Sigmoid colon (tissue), 7 donors: ENCODE measurements at regions of chr6 and their contacts with region 1.

Region 1: DNA sequence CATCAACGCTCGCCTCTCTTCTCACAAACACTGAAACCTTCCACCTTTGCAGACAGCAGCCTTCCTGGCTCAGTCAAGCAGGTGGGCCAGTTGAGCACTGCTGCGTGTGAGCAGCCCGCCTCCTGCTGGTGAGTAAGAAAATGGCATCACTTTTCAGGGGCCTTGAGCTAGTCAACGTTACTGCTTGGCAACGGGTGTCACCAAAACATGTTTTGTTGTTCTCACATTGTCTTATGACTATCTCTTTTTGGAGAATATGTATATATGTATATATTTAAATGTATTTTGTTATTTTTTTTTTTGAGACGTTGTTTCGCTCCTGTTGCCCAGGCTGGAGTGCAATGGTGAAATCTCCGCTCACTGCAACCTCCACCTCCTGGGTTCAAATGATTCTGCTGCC is 97.0 kb upstream of the AGPAT4 start:
- DNase-seq: no peak
- H3K4me3 ChIP-seq: no peak overlapping the region
- H3K27ac ChIP-seq: no peak overlapping the region
- H3K4me1 ChIP-seq: peaks cover 0 to 6% (median 0%) of the 10 kb centered on the region in 4 donors
- H3K27me3 ChIP-seq: no peaks in the 10 kb centered on the region
- CTCF ChIP-seq: peak; percentile 67 to 81 (median 71)
- EP300 ChIP-seq: no peak
- POLR2A ChIP-seq: no peak

Region 2: DNA sequence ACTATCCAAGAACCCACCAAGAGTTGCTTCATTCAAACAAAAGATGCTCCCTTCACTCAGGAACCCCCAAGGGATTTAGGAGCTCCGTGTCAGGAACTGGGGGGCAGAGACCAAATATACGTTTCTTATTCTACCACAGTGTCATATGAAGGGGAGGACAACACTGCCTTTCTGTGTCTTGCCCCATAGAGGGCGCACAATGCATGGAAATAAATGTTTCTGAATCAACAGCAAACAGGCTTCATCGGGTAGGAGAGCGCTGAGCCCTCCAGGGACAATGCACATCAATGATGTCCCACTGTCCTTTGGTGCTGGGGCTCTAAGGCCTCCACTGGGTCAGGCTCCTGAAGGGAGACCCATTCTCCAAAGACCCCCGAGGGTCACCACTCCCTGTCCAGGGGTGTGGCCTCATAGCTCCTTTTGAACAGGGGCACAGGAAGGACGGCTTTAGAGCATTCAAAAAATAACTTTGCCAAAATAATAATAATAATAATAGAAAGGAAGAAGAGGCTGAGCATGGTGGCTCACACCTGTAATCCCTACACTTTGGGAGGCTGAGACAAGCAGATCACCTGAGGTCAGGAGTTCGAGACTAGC is 637.7 kb before region 1 on chr6:
- intact Hi-C with region 1: loop called (anchors 5 kb)
- DNase-seq: no peak
- H3K4me3 ChIP-seq: no peak overlapping the region
- H3K27ac ChIP-seq: no peak overlapping the region
- H3K4me1 ChIP-seq: no peaks in the 10 kb centered on the region
- H3K27me3 ChIP-seq: no peaks in the 10 kb centered on the region
- CTCF ChIP-seq: peak; percentile 21 to 44 (median 40)
- EP300 ChIP-seq: no peak
- POLR2A ChIP-seq: no peak

Region 3: DNA sequence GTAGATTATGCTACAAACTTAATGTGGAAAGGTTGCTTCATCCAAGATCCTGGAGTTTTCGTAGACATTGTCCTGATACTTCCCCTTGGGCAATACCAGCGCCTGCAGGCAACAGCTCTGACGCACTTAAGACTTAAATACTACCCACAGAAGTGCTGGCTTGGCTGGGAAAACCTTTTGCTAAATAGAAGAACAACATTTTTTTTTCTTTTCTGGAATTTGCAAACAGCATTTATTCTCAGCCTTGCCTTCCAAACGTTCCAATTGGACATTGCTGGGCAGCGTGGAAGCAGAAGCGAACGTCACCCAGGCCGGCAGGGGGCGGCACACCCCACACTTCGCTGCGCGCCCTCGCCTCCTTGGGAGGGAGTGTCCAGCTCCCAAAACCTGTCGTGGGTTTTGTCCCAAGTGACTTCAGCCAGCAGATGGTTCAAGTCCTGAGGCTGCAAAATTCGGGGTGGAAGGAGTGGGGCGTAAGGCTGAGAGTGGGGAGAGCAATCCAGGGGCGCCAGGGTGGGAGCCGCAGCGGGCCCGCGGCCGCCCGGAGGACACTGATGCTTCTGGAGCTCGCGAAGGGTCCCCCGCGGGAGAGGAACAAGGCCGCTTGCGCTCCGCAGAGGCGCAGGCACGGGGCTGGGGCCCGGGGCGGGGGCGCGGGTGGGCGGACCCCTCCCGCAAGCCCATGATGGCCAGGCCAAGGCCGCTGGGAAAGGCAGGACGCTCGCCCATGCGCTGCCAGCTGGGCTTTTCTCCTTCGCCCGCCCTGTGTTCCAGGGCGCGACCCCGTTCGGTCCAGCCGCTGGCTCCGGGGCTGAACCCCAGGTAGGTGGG is 440.1 kb before region 1 on chr6:
- intact Hi-C with region 1: loop called (anchors 1 kb)
- DNase-seq: peak; percentile 89
- H3K4me3 ChIP-seq: peak overlapping the region; percentile 32 to 58 (median 52)
- H3K27ac ChIP-seq: peak overlapping the region in 3 of 4 donors; percentile 22 to 62 (median 41)
- H3K4me1 ChIP-seq: peaks cover 0 to 12% (median 8%) of the 10 kb centered on the region in 4 donors
- H3K27me3 ChIP-seq: peaks cover 0 to 8% (median 0%) of the 10 kb centered on the region in 3 donors
- CTCF ChIP-seq: peak; percentile 87 to 93 (median 89)
- EP300 ChIP-seq: peak in 2 of 4 donors; percentile 9 to 13
- POLR2A ChIP-seq: no peak

Region 4: DNA sequence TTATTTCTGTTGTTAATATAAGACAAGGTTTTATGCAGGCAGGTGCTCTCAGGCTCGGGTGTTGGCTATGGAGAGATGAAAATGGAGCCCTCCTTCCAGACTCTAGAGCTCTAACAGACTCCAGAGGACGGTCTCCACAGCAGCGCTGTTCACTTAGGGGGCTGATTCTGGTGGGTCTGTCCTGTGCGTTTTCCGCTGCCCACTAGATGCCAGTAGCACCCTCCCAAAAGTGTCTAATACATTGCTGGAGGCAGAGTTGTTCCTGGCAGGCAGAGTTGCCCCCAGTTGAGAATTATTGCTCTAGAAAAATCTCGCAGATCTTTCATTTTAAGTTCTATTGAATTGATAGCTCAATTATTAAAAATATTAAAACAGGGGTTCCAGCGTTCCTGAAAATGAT is 269.4 kb before region 1 on chr6:
- intact Hi-C with region 1: loop called (anchors 10 kb)
- DNase-seq: no peak
- H3K4me3 ChIP-seq: no peak overlapping the region
- H3K27ac ChIP-seq: no peak overlapping the region
- H3K4me1 ChIP-seq: no peaks in the 10 kb centered on the region
- H3K27me3 ChIP-seq: no peaks in the 10 kb centered on the region
- CTCF ChIP-seq: no peak
- EP300 ChIP-seq: no peak
- POLR2A ChIP-seq: no peak

Region 5: GRCh38 chr6:161139766-161140553 is 230.9 kb before region 1 on chr6:
- intact Hi-C with region 1: loop called (anchors 2 kb)
- DNase-seq: peak; percentile 78
- H3K4me3 ChIP-seq: no peak overlapping the region
- H3K27ac ChIP-seq: no peak overlapping the region
- H3K4me1 ChIP-seq: no peaks in the 10 kb centered on the region
- H3K27me3 ChIP-seq: no peaks in the 10 kb centered on the region
- CTCF ChIP-seq: peak in 1 of 4 experiments; percentile 38
- EP300 ChIP-seq: no peak
- POLR2A ChIP-seq: no peak

Region 6: DNA sequence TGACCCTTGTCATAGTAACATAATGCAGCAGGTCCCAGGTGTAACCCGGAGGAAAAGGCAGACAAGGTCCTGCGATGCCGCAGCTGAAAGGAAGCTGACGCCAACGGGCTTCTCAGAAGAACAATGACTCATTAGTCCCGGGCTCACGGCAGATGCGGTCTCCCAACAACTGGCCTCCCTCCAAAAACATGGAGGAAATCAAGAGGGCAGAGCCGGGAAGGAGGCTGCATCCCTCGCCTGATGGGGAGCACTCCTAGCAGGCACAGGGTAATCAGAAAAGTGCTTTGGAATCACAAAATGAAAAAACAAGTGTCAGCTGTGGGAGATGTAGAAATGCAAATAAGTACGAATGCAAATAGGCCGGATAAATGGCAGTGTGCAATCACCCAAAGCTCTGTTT is 68.2 kb after region 1 on chr6:
- intact Hi-C with region 1: no loop called
- DNase-seq: peak; percentile 76
- H3K4me3 ChIP-seq: peak overlapping the region in 3 of 4 donors; percentile 4 to 14 (median 6)
- H3K27ac ChIP-seq: peak overlapping the region in 3 of 4 donors; percentile 26 to 39 (median 35)
- H3K4me1 ChIP-seq: peaks cover 0 to 27% (median 24%) of the 10 kb centered on the region in 4 donors
- H3K27me3 ChIP-seq: no peaks in the 10 kb centered on the region
- CTCF ChIP-seq: no peak
- EP300 ChIP-seq: no peak
- POLR2A ChIP-seq: no peak